Ovary (tissue), 10 donors: ENCODE measurements at regions of chr10 and their contacts with region 1.

Region 1: GRCh38 chr10:124019886-124020797 is 73.3 kb downstream of the CHST15 start:
- DNase-seq: no peak
- H3K4me3 ChIP-seq: no peak overlapping the region
- H3K27ac ChIP-seq: no peak overlapping the region
- H3K4me1 ChIP-seq: peaks cover 8% of the 10 kb centered on the region
- H3K27me3 ChIP-seq: no peaks in the 10 kb centered on the region
- CTCF ChIP-seq: no peak
- EP300 ChIP-seq: no peak
- POLR2A ChIP-seq: no peak

Region 2: DNA sequence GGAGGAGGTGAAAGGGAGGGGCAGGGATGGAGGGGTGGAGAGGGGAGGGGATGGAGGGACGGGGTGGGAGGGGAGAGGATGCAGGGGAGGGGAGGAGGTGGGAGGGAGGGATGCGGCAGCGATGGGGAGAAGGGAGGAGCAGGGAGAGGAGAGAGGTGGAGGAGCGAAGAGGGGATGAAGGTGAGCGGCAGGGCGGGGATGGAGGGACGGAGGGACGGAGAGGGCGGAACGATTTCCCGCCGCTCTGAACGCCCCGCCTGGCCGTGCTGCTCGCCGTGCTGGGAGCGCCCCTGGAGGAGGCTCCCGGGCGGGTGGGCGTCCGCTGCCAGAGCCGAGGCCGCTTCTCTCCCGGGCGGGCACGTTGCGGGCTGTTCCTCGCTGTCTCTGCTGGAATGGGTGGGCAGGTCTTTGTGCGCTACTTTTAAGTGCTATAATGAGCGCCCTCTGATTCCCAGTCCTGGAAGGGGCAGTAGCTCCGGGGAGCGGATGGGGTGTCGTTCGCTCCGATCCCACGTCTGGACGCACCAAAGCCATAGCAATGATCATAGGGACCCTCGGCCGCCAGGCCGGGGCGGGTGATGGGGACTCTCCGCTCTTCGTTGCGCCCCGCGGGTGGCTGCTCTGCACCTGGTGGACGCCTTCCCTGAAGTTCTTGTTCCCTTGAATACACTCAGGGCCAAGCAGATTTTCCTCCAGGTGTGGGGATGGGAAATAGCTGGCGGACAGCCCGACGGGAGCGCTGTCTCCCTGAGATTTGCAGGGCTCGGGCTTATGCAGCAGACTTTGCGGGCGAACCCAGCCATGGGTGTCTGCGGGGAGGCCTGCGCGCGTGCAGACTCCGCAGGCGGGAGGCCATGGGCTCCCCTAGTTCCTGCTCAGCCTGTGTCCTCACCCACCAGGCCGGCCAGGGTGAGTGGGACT is 47.4 kb before region 1 on chr10:
- intact Hi-C with region 1: loop called in 1 of 4 experiments (anchors 2 kb)
- DNase-seq: no peak
- H3K4me3 ChIP-seq: no peak overlapping the region
- H3K27ac ChIP-seq: no peak overlapping the region
- H3K4me1 ChIP-seq: no peaks in the 10 kb centered on the region
- H3K27me3 ChIP-seq: no peaks in the 10 kb centered on the region
- CTCF ChIP-seq: no peak
- EP300 ChIP-seq: no peak
- POLR2A ChIP-seq: no peak

Region 3: DNA sequence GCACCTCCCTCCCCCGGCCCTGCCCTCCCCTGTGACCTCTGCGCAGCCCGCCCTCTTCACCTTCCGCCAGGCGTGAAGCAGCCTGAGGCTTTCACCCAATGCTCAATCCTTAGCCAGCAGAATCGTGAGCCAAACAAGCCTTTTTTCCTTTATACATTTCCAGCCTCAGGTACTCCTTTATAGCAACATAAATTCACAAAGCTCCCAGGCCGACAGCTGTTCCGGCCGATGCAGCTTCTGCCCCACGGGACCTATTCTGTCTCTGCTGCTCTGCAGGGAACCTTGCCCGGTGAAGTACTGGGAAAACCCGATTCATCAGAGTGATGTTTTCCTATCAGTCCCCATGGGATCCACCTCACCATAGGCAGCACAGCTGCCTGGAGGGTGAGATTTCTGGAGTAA is 14.2 kb before region 1 on chr10:
- intact Hi-C with region 1: no loop called
- DNase-seq: peak in 3 of 5 donors; percentile 17 to 25 (median 24)
- H3K4me3 ChIP-seq: no peak overlapping the region
- H3K27ac ChIP-seq: no peak overlapping the region
- H3K4me1 ChIP-seq: peaks cover 9% of the 10 kb centered on the region
- H3K27me3 ChIP-seq: no peaks in the 10 kb centered on the region
- CTCF ChIP-seq: no peak
- EP300 ChIP-seq: no peak
- POLR2A ChIP-seq: no peak